ENCODE measurements at regions of chr17 and their contacts with region 1.

Region 1: GRCh38 chr17:58317421-58318064 is 11.1 kb downstream of the TSPOAP1 start:
- DNase-seq: peak; percentile 43
- H3K4me3 ChIP-seq: no peak overlapping the region
- H3K27ac ChIP-seq: no peak overlapping the region
- H3K27me3 ChIP-seq: no peaks in the 10 kb centered on the region
- CTCF ChIP-seq: peak; percentile 94

Region 2: GRCh38 chr17:58084317-58084981 is 233.1 kb before region 1 on chr17:
- CTCF ChIA-PET with region 1: no interaction called
- POLR2A ChIA-PET with region 1: no interaction called
- DNase-seq: no peak
- H3K4me3 ChIP-seq: peak overlapping the region; percentile 79
- H3K27ac ChIP-seq: peak overlapping the region; percentile 11
- H3K27me3 ChIP-seq: peaks cover 6% of the 10 kb centered on the region
- CTCF ChIP-seq: peak; percentile 14; the same call in 1 of the 2 replicates

Region 3: DNA sequence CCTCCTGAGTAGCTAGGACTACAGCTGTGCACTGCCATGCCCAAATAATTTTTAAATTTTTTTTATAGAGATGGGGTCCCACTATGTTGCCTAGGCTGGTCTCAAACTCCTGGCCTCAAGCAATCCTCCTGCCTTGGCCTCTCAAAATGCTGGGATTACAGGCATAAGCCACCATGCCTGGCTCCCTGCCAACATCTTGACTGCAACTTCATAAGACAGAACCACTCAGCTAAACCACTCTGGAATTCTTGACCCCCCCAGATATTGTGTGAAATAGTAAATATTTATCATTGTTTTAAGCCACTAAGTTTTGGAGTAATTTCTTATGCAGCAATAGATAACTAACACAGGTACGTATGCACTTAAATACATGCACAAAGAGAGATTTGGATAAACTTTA is 208.3 kb before region 1 on chr17:
- CTCF ChIA-PET with region 1: no interaction called
- POLR2A ChIA-PET with region 1: no interaction called
- DNase-seq: no peak
- H3K4me3 ChIP-seq: no peak overlapping the region
- H3K27ac ChIP-seq: no peak overlapping the region
- H3K27me3 ChIP-seq: no peaks in the 10 kb centered on the region
- CTCF ChIP-seq: no peak

Region 4: DNA sequence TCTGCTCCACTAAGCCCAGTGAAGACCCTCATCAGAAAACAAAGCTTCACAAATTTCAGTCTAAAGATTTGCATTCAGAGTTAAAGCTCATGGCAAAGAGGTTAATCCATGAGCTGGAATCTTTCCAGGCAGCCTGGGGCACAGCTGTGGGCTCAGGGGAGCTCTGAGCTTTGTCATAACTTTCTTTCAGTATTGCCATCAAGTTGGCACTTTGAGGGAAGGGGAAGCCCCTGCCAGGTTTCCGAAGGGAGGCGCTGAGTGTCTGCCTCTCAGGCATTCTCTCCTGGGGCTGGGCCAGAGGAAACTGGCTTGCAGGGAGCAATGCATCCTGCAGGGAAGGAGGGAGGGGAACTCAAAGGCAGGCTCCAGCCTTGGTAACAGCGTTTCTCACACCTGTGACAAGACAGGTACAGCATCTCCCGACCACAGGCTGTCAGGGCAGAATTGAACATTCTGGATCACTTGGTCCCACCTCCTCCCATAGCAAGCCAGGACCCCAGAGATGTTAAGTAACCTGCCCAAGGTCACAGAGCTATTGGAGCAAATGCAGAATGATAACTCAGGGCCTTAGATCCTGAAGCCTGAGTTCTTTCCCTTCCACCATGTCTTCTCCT is 75.3 kb before region 1 on chr17:
- CTCF ChIA-PET with region 1: no interaction called
- POLR2A ChIA-PET with region 1: no interaction called
- DNase-seq: no peak
- H3K4me3 ChIP-seq: no peak overlapping the region
- H3K27ac ChIP-seq: no peak overlapping the region
- H3K27me3 ChIP-seq: peaks cover 43% of the 10 kb centered on the region
- CTCF ChIP-seq: no peak

Region 5: GRCh38 chr17:58303971-58304725 is 13.4 kb before region 1 on chr17:
- CTCF ChIA-PET with region 1: interaction called, 15 read pairs
- POLR2A ChIA-PET with region 1: no interaction called
- DNase-seq: no peak
- H3K4me3 ChIP-seq: no peak overlapping the region
- H3K27ac ChIP-seq: no peak overlapping the region
- H3K27me3 ChIP-seq: peaks cover 2% of the 10 kb centered on the region
- CTCF ChIP-seq: peak; percentile 74

Region 6: DNA sequence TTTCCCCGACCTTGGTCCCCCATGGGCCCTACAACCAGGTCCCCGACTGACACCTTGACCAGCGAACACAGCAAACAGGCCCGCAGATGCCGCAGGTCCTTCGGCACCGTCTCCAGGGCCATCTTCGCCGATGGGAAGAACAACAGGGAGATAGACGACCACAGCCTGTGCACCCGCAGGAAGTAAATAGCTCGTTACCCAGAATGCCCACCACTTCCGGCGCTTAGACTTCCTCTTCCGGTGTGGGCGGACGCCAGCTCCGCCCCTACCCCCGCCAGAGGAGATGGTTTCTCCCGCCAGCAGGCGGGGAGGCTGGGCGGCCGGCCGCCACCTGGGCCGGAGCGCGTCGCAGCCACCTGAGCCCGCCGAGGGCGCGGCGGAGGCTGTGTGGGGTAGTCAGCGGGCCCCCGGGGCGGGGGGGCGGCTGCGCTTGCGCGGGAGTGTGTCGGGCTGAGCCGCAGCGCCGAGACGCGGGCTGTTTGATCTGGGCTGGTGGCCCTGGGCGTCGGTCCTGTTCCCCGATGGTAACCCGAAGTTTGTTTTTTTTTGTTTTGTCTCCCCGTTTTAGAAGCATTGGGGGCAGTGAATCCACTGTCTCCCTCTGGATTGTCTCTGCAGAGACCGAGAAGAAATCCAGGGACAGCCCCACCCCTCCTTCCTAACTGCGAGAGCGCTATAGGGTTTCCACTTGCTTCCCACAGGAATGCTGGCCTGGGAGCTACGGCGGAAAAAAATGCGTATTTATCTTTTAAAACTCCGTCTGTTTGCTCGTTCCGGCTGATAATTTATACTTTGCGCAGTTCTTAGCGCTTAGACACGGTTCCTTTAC is 34.7 kb after region 1 on chr17 and contains the start of gene SUPT4H1:
- CTCF ChIA-PET with region 1: interaction called, 25 read pairs
- POLR2A ChIA-PET with region 1: interaction called, 22 read pairs
- DNase-seq: peak; percentile 85
- H3K4me3 ChIP-seq: peak within 1 kb of the TSS; percentile 98
- H3K27ac ChIP-seq: peak within 1 kb of the TSS; percentile 87
- H3K27me3 ChIP-seq: peaks cover 4% of the 10 kb centered on the region
- CTCF ChIP-seq: no peak
- polyA plus RNA-seq, gene SUPT4H1: 178 and 191 TPM in 2 replicates

Region 7: GRCh38 chr17:58417300-58418092 is 100.0 kb after region 1 on chr17 and contains the start of gene RNF43:
- CTCF ChIA-PET with region 1: interaction called, 107 read pairs
- POLR2A ChIA-PET with region 1: interaction called, 8 read pairs
- DNase-seq: peak; percentile 48
- H3K4me3 ChIP-seq: peak within 1 kb of the TSS; percentile 48
- H3K27ac ChIP-seq: no peak within 1 kb of the TSS
- H3K27me3 ChIP-seq: peaks cover 10% of the 10 kb centered on the region
- CTCF ChIP-seq: peak; percentile 93
- polyA plus RNA-seq, gene RNF43: not detected in 2 replicates

Region 8: GRCh38 chr17:58447039-58447975 is 129.8 kb after region 1 on chr17:
- CTCF ChIA-PET with region 1: interaction called, 68 read pairs
- POLR2A ChIA-PET with region 1: no interaction called
- DNase-seq: peak; percentile 76
- H3K4me3 ChIP-seq: no peak overlapping the region
- H3K27ac ChIP-seq: no peak overlapping the region
- H3K27me3 ChIP-seq: no peaks in the 10 kb centered on the region
- CTCF ChIP-seq: peak; percentile 94